ENCODE measurements at regions of chr16 and their contacts with region 1.

Region 1: GRCh38 chr16:66977341-66978113 is 10.9 kb upstream of the CES4A start:
- DNase-seq: peak; percentile 92
- H3K4me3 Mint-ChIP-seq: no peak overlapping the region
- H3K27ac Mint-ChIP-seq: peak overlapping the region; percentile 64
- H3K4me1 Mint-ChIP-seq: peaks cover 58% of the 10 kb centered on the region
- H3K27me3 Mint-ChIP-seq: no peaks in the 10 kb centered on the region

Region 2: GRCh38 chr16:66588981-66589713 is 388.4 kb before region 1 on chr16:
- CTCF ChIA-PET with region 1: no interaction called
- POLR2A ChIA-PET with region 1: no interaction called
- DNase-seq: peak; percentile 81
- H3K4me3 Mint-ChIP-seq: peak overlapping the region; percentile 67
- H3K27ac Mint-ChIP-seq: peak overlapping the region; percentile 47
- H3K4me1 Mint-ChIP-seq: peaks cover 26% of the 10 kb centered on the region
- H3K27me3 Mint-ChIP-seq: peaks cover 2% of the 10 kb centered on the region

Region 3: GRCh38 chr16:66961065-66961744 is 16.3 kb before region 1 on chr16 and contains the start of gene CES3:
- CTCF ChIA-PET with region 1: interaction called, 29 read pairs
- POLR2A ChIA-PET with region 1: interaction called, 5 read pairs
- DNase-seq: peak; percentile 81
- H3K4me3 Mint-ChIP-seq: peak within 1 kb of the TSS; percentile 71
- H3K27ac Mint-ChIP-seq: peak within 1 kb of the TSS; percentile 57
- H3K4me1 Mint-ChIP-seq: peaks cover 44% of the 10 kb centered on the region
- H3K27me3 Mint-ChIP-seq: peaks cover 2% of the 10 kb centered on the region
- total RNA-seq, gene CES3: 6.1 to 6.3 TPM

Region 4: DNA sequence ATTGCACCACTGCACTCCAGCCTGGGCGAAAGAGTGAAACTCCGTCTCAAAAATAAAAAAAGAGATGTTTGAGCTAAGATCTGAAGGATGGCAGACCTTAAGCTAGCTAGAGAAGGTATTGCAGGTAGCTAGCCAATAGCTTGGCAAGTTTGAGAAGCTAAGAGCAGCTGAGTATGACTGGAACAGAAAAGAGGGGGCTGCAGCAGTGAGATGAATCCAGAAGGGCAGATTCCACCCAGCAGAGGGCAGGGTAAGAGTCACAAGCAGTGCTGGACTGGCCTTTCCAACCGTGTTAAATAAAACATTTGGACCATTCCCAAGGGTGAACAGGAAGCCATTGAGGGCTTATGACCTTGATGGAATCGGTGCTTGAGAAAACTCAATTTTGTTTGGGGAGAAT is 126.5 kb after region 1 on chr16:
- CTCF ChIA-PET with region 1: interaction called, 12 read pairs
- POLR2A ChIA-PET with region 1: no interaction called
- DNase-seq: no peak
- H3K4me3 Mint-ChIP-seq: no peak overlapping the region
- H3K27ac Mint-ChIP-seq: peak overlapping the region; percentile 8
- H3K4me1 Mint-ChIP-seq: peaks cover 2% of the 10 kb centered on the region
- H3K27me3 Mint-ChIP-seq: no peaks in the 10 kb centered on the region